Aorta (tissue), 5 donors: ENCODE measurements at regions of chr16 and their contacts with region 1.

Region 1: GRCh38 chr16:67191995-67192681 is at the start of gene E2F4:
- DNase-seq: peak; percentile 95 to 96
- ATAC-seq: peak; percentile 95
- H3K4me3 ChIP-seq: peak within 1 kb of the TSS; percentile 71 to 81
- H3K27ac ChIP-seq: no peak within 1 kb of the TSS
- H3K4me1 ChIP-seq: no peaks in the 10 kb centered on the region
- H3K27me3 ChIP-seq: no peaks in the 10 kb centered on the region
- total RNA-seq, gene E2F4: 54.2 to 58.1 TPM

Region 2: GRCh38 chr16:67109407-67110135 is 82.6 kb before region 1 on chr16 and contains the start of gene PHAF1:
- intact Hi-C with region 1: no loop called
- DNase-seq: peak; percentile 95 to 98
- ATAC-seq: peak; percentile 98
- H3K4me3 ChIP-seq: peak within 1 kb of the TSS; percentile 50 to 71
- H3K27ac ChIP-seq: peak within 1 kb of the TSS in 1 of 2 donors; percentile 48
- H3K4me1 ChIP-seq: no peaks in the 10 kb centered on the region
- H3K27me3 ChIP-seq: no peaks in the 10 kb centered on the region
- total RNA-seq, gene PHAF1: 13.7 to 20.7 TPM

Region 3: DNA sequence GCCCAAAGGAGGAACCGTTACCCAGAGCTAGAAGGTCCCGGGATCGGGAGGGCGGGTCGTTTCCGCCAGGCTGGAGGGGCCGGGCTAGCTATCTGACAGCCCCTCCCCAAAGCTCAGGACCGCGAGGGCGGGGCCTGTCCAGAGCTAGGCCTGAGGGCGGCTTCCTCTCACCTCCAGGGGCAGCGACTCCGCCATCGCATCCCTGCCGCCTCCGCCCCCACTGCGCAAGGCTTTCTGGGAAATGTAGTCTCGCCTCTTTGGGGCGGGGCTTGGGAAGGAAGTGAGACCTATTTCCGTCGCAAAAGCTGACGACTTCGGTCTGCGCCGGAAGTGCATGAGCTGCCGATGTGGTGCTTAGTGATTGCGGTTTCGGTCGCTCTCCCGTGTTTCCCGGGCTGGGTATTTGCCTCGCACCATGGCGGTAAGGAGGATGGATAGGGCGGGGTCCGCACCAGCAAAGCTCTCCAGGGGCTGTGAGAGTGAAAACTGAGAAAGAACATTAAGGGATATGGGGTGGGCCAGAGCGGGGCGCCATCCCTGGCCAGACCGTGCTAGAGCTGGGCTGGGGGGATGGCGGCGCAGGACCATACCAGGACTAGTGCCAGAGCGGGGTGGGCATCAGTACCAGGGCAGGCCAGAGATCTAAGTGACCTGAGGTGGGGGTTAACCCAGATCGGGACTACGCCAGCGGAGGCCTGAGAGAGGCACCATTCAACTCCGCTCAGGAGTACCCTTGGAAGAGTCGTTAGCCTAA is 34.8 kb after region 1 on chr16 and contains the start of gene TMEM208:
- intact Hi-C with region 1: loop called in 1 of 2 experiments (anchors 5 kb)
- DNase-seq: peak; percentile 98 to 99
- ATAC-seq: peak; percentile 97
- H3K4me3 ChIP-seq: peak within 1 kb of the TSS; percentile 77
- H3K27ac ChIP-seq: peak within 1 kb of the TSS in 1 of 2 donors; percentile 48
- H3K4me1 ChIP-seq: no peaks in the 10 kb centered on the region
- H3K27me3 ChIP-seq: no peaks in the 10 kb centered on the region
- total RNA-seq, gene TMEM208: 24.7 to 33.1 TPM

Region 4: GRCh38 chr16:67326472-67327309 is 134.6 kb after region 1 on chr16 and contains the starts of genes KCTD19 and LRRC36:
- intact Hi-C with region 1: no loop called
- DNase-seq: peak; percentile 71 to 88
- ATAC-seq: peak; percentile 57
- H3K4me3 ChIP-seq: no peak within 1 kb of the TSS
- H3K27ac ChIP-seq: no peak within 1 kb of the TSS
- H3K4me1 ChIP-seq: no peaks in the 10 kb centered on the region
- H3K27me3 ChIP-seq: no peaks in the 10 kb centered on the region
- total RNA-seq, gene KCTD19: 0.12 TPM in 1 of 2 donors, not detected in the other
- total RNA-seq, gene LRRC36: 0.51 TPM in 1 of 2 donors, not detected in the other